Caco-2 (cell line): ENCODE measurements at regions of chr11 and their contacts with region 1.

Region 1: DNA sequence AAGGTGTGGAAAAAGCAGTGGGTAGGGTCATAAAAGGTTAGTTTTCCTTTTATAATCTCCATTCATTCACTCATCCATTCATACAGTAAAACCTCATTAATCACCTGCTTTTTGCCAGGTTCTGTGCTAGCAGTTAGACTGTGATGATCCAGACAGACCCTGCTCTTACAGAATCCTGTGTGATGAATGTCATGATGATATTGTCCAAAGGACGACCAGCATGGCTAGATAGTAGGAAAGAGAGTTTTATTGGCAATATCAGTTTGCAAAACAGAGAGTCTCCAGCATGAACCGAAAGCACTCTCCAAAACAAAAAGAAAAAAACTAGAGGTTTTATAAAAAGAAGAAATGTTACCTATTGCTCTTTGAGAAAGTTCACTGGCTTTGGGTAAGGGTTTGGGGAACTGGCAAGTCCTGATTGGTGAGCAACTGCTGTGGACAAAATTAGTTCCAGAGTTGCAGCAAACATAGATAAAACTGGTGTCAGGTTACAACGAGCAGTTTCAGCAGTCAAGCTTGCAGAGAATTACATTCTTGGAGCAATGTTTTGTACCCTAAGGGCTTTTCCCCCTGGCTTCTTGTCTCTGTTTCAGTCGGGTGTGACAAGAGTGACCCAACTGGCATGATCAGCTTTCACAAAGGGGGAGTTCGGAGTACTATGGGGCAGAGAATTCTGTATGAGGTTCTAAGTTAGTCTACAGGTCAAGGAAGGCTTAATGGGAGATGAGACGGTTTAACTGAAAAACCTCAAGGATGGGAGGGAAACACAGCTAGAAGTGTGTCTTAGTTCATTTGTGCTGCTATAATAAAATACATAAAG is 58.3 kb downstream of the HSD17B12 start:
- DNase-seq: peak; percentile 79
- H3K4me3 ChIP-seq: no peak overlapping the region
- H3K4me3 Mint-ChIP-seq: peak overlapping the region; percentile 38
- H3K27ac Mint-ChIP-seq: peak overlapping the region; percentile 79
- H3K4me1 ChIP-seq: peaks cover 44% of the 10 kb centered on the region
- H3K4me1 Mint-ChIP-seq: peaks cover 50% of the 10 kb centered on the region
- H3K27me3 ChIP-seq: no peaks in the 10 kb centered on the region
- H3K27me3 Mint-ChIP-seq: no peaks in the 10 kb centered on the region
- CTCF ChIP-seq: no peak

Region 2: GRCh38 chr11:43643898-43644620 is 94.7 kb before region 1 on chr11:
- CTCF ChIA-PET with region 1: no interaction called
- POLR2A ChIA-PET with region 1: no interaction called
- intact Hi-C with region 1: loop called (anchors 5 kb)
- DNase-seq: peak; percentile 82 to 88
- H3K4me3 ChIP-seq: peak overlapping the region; percentile 83
- H3K4me3 Mint-ChIP-seq: peak overlapping the region; percentile 79
- H3K27ac Mint-ChIP-seq: peak overlapping the region; percentile 92
- H3K4me1 ChIP-seq: 0 out of 2 replicates have a peak, but pooled peaks cover 5% of the 10 kb centered on the region
- H3K4me1 Mint-ChIP-seq: no peaks in the 10 kb centered on the region
- H3K27me3 ChIP-seq: no peaks in the 10 kb centered on the region
- H3K27me3 Mint-ChIP-seq: peaks cover 12% of the 10 kb centered on the region
- CTCF ChIP-seq: no peak